Left ventricle myocardium superior (tissue), 1 donor: ENCODE measurements at regions of chr12 and their contacts with region 1.

Region 1: GRCh38 chr12:3275171-3276041 is 198.2 kb downstream of the TSPAN9 start:
- DNase-seq: peak; percentile 87
- ATAC-seq: peak; percentile 61

Region 2: GRCh38 chr12:3129301-3130056 is 145.9 kb before region 1 on chr12:
- intact Hi-C with region 1: loop called (anchors 5 kb)
- DNase-seq: no peak
- ATAC-seq: no peak

Region 3: DNA sequence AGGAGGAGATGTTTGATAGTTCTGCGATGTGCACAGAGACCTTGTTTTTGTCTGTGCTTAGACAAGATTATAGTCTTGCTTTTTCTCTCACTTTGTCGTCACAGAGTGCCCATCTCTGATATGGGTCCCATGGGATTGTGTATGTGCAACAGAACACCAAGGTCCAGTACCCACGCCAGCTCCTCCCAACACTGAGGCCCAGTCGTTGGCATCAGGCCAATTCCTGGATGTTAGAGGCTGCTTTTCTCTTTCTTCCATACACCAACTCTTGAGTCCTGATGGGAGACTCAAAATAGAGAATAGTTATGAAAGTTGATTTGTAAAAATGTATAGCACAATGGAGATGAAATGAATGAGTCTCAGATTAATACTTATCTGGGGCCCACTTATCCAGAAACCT is 192.9 kb after region 1 on chr12:
- intact Hi-C with region 1: no loop called
- DNase-seq: no peak
- ATAC-seq: no peak